ENCODE measurements at regions of chr3 and their contacts with region 1.

Region 1: DNA sequence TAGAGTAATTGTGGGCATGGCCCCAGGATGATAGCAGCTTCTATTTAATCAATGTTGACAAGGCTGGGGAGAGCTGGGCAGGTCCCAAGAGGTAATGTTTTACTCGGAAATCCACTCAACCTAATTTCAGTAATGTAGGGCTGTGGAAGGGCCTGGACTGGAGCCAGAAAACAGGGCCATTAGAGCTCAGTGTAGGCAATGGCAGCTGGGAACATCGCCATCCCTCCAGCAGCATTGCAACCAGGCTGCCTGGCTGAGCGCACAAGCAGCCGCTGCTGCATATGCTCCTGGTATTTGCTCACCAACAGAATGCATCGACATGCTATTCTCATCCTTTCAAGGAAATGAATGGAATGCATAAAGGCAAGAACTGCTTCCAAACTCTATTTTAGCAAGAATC is 90.0 kb downstream of the GAP43 start:
- DNase-seq: peak; percentile 89
- H3K4me3 ChIP-seq: no peak overlapping the region
- H3K27ac ChIP-seq: no peak overlapping the region
- H3K4me1 ChIP-seq: peaks cover 44% of the 10 kb centered on the region
- H3K27me3 ChIP-seq: no peaks in the 10 kb centered on the region
- CTCF ChIP-seq: no peak

Region 2: GRCh38 chr3:115766587-115767480 is 53.5 kb after region 1 on chr3:
- CTCF ChIA-PET with region 1: no interaction called
- POLR2A ChIA-PET with region 1: no interaction called
- intact Hi-C with region 1: loop called (anchors 2 kb)
- DNase-seq: peak; percentile 85
- H3K4me3 ChIP-seq: no peak overlapping the region
- H3K27ac ChIP-seq: peak overlapping the region; percentile 37
- H3K4me1 ChIP-seq: peaks cover 18% of the 10 kb centered on the region
- H3K27me3 ChIP-seq: no peaks in the 10 kb centered on the region
- CTCF ChIP-seq: no peak

Region 3: DNA sequence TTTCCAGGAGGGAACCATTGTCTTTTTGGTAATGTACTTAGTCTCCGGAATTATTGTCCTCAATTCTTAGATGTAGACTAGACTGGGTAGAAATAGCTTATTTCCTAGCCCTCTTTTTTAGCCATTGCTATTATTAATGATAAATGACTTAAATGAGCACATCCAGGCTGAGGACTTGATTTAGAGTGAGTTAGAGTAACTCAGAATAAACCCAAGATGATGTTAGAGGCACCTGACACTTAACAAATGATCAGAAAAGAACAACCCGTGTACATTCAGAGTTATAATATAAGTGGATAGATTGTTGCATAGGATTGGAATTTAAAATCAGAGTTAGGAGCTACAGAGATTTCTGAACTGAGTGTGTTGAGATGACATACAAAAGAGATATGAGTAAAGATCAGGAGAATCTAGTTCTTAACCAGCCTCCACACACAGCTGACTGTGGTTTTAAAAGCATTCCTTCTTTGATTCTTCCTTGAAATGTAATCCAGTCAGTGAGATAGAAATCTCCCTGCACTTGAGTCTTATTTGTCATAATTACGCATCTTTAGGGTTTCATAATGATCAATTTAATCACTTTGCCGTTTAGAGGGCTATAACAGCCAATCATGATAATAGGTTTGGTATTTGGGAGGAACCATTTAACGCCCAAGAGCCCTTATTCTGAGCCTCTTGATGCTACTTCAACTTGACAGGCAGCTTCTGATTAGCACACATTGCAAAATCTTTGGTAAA is 276.6 kb after region 1 on chr3:
- CTCF ChIA-PET with region 1: no interaction called
- POLR2A ChIA-PET with region 1: no interaction called
- intact Hi-C with region 1: no loop called
- DNase-seq: peak; percentile 41
- H3K4me3 ChIP-seq: no peak overlapping the region
- H3K27ac ChIP-seq: peak overlapping the region; percentile 17
- H3K4me1 ChIP-seq: peaks cover 28% of the 10 kb centered on the region
- H3K27me3 ChIP-seq: no peaks in the 10 kb centered on the region
- CTCF ChIP-seq: no peak